Dendritic cell treated with granulocyte-macrophage colony-stimulating factor and Interleukin-4, amounts not matched to agents 40 ng/mL and 50 ng/mL, for 4 days (primary cell): ENCODE measurements at regions of chr2 and their contacts with region 1.

Region 1: DNA sequence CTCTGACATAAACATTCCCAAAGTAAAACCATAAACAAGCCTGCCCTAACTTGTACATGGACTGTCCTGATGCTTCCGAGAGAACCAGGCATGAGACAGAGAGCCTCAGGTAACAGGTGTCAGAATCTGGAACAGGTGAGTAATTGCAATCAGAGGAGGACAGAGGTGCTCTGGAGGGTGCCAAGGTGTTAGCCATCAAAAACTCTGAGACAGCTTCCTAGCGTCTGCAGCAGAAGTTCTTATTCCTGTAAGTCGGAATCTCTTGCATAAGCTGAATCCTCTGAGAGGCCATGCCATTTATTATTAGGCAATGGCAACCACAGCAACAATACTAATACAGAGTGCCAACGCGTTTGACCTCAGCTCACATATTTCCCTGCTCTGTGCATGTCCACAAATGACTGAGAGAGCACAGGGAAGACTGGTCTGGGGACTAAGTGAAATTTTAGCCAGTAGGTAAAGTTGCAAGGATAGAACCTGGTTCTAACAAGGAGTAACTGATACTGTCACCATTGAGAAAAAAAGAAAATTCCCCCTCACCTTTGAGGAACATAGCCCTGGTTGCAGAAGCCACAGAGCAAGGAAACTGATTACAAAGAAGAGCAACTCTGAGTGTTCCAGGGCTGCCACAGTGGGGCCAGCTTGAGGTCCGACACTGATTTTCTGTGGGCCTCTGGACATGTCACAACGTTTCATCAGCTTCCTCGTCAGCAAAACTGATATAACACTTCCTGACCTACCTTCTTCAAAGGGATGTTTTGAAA is 55.1 kb upstream of the ACSL3 start:
- H3K4me3 Mint-ChIP-seq: no peak overlapping the region
- H3K27ac Mint-ChIP-seq: peak overlapping the region; percentile 67
- H3K4me1 Mint-ChIP-seq: peaks cover 30% of the 10 kb centered on the region
- H3K27me3 Mint-ChIP-seq: no peaks in the 10 kb centered on the region

Region 2: DNA sequence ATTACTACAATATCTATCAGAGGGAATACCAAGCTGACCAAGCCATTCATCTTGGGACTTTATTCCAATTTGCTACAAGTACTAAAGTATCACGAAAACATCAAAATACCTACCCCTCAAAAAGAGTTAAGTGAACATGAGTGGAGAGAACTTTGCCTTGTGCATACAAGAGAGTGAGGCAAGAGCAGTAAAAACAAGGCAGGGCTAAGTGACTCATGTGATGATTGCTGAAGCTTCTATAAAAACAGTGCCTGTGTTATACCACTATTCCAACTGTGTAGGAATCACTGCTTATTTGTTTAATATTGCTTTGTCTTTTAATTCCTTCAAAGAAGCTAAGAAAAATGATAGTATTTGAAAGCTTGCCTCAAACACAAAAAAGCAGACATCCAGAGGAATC is 211.0 kb before region 1 on chr2:
- intact Hi-C with region 1: no loop called
- H3K4me3 Mint-ChIP-seq: no peak overlapping the region
- H3K27ac Mint-ChIP-seq: no peak overlapping the region
- H3K4me1 Mint-ChIP-seq: no peaks in the 10 kb centered on the region
- H3K27me3 Mint-ChIP-seq: no peaks in the 10 kb centered on the region

Region 3: DNA sequence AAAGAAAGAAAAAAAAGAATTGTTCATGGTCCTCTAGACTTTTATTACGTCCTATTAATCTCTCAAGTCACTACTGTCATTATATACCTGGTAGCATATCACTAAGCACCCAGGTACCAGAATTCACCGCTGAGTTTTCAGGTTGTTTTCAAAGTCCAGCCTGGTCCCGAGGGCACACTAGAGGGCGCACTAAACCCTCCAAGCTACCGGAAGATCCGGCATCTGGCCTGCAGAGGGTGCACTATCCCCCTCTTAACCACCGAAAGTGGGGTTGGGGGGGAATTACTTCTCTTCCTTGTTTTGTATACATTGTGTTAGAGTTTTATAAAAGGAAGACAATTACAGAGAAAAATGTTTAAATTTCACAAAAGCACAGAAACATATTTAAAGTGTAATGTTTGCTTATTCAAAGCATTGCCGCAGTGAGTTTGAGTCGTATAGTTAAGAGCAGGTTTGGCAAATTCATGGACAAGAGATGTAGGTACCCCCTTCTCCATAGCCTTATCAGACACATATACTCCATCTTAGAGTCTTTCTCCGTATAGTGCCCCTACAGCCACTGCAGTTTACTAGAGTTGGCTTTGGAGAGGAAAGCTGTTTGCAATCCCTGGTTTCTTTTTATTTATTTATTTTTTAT is 115.0 kb before region 1 on chr2:
- intact Hi-C with region 1: no loop called
- H3K4me3 Mint-ChIP-seq: no peak overlapping the region
- H3K27ac Mint-ChIP-seq: no peak overlapping the region
- H3K4me1 Mint-ChIP-seq: peaks cover 16% of the 10 kb centered on the region
- H3K27me3 Mint-ChIP-seq: no peaks in the 10 kb centered on the region

Region 4: GRCh38 chr2:222833410-222833809 is 27.7 kb after region 1 on chr2:
- intact Hi-C with region 1: no loop called
- H3K4me3 Mint-ChIP-seq: no peak overlapping the region
- H3K27ac Mint-ChIP-seq: no peak overlapping the region
- H3K4me1 Mint-ChIP-seq: peaks cover 10% of the 10 kb centered on the region
- H3K27me3 Mint-ChIP-seq: no peaks in the 10 kb centered on the region

Region 5: GRCh38 chr2:222844323-222844722 is 38.6 kb after region 1 on chr2:
- intact Hi-C with region 1: loop called (anchors 5 kb)
- H3K4me3 Mint-ChIP-seq: peak overlapping the region; percentile 26
- H3K27ac Mint-ChIP-seq: peak overlapping the region; percentile 91
- H3K4me1 Mint-ChIP-seq: peaks cover 72% of the 10 kb centered on the region
- H3K27me3 Mint-ChIP-seq: no peaks in the 10 kb centered on the region